ENCODE measurements at regions of chr11 and their contacts with region 1.

Region 1: GRCh38 chr11:86014221-86014620 is 54.7 kb downstream of the PICALM start:
- DNase-seq: no peak
- ATAC-seq: no peak
- H3K4me3 ChIP-seq: no peak overlapping the region
- H3K27ac ChIP-seq: no peak overlapping the region
- H3K4me1 ChIP-seq: no peaks in the 10 kb centered on the region
- H3K27me3 ChIP-seq: no peaks in the 10 kb centered on the region
- CTCF ChIP-seq: no peak
- POLR2A ChIP-seq: no peak
- RAD21 ChIP-seq: no peak

Region 2: DNA sequence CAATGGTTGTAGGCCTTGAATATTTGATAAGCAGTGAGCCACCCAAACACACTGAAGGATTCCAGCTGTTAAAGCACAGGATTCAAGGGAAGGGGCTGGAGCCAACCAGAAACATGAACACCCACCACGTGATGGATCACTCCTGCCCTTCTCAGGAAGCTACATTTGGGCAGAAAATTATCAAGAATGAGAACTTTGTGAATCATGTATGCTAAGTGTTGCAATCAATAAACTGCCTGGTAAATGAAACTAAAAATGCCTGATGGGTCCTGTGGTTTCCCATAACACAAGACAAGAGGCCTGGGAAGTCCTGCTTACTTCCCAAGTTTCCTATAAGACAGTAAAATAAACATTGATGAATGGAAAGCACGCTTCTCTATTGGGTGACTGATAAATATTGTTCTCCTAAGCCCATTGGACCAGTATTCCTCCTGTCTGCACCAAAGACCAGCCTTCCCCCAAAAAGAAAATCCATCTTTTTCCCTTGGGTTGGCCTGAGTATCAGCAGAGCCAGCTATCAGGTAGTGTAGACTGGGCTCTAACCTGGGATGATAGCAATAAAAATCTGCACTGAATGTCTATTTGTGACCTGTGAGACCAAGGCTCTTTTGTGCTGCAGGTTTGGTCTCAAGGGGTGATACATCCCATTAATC is 60.6 kb before region 1 on chr11:
- CTCF ChIA-PET with region 1: no interaction called
- POLR2A ChIA-PET with region 1: no interaction called
- dilution Hi-C with region 1: no loop called
- in situ Hi-C with region 1: no loop called
- intact Hi-C with region 1: no loop called
- DNase-seq: peak; percentile 68
- ATAC-seq: peak; percentile 18
- H3K4me3 ChIP-seq: no peak overlapping the region
- H3K27ac ChIP-seq: no peak overlapping the region
- H3K4me1 ChIP-seq: peaks cover 4% of the 10 kb centered on the region
- H3K27me3 ChIP-seq: no peaks in the 10 kb centered on the region
- CTCF ChIP-seq: no peak
- POLR2A ChIP-seq: no peak
- RAD21 ChIP-seq: no peak

Region 3: DNA sequence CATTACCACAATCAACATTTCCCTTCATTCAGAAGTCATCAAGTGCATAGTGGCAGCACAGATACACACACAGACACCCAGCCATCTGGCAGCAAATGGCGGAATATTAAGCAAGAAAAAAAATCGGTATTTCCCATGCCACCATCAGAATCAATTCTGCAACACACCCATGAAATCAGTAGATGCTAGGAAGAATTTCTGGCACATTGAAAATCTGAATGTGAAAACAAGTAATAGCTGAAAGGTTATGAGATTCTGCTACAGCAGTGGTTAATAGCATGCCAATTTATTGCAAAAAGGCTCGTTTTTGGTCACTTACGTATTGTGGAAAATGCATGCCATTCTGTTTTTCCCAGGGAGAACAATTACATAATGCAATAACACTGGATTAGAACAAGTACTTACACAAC is 36.5 kb before region 1 on chr11:
- CTCF ChIA-PET with region 1: no interaction called
- POLR2A ChIA-PET with region 1: no interaction called
- dilution Hi-C with region 1: no loop called
- in situ Hi-C with region 1: no loop called
- intact Hi-C with region 1: loop called (anchors 5 kb)
- DNase-seq: no peak
- ATAC-seq: no peak
- H3K4me3 ChIP-seq: no peak overlapping the region
- H3K27ac ChIP-seq: no peak overlapping the region
- H3K4me1 ChIP-seq: peaks cover 2% of the 10 kb centered on the region
- H3K27me3 ChIP-seq: no peaks in the 10 kb centered on the region
- CTCF ChIP-seq: no peak
- POLR2A ChIP-seq: no peak
- RAD21 ChIP-seq: no peak

Region 4: GRCh38 chr11:85989746-85990145 is 24.5 kb before region 1 on chr11:
- CTCF ChIA-PET with region 1: interaction called, 8 read pairs
- POLR2A ChIA-PET with region 1: no interaction called
- dilution Hi-C with region 1: no loop called
- in situ Hi-C with region 1: no loop called
- intact Hi-C with region 1: loop called (anchors 2 kb)
- DNase-seq: no peak
- ATAC-seq: no peak
- H3K4me3 ChIP-seq: no peak overlapping the region
- H3K27ac ChIP-seq: no peak overlapping the region
- H3K4me1 ChIP-seq: no peaks in the 10 kb centered on the region
- H3K27me3 ChIP-seq: no peaks in the 10 kb centered on the region
- CTCF ChIP-seq: no peak
- POLR2A ChIP-seq: no peak
- RAD21 ChIP-seq: no peak

Measured in IMR-90 (cell line).